Activated CD4-positive, alpha-beta T cell treated with anti-CD3 and anti-CD28 coated beads, Interleukin-2, amount 10 ng/mL, durations not matched to agents 24 days and 14 days (primary cell): ENCODE measurements at regions of chr1 and their contacts with region 1.

Region 1: GRCh38 chr1:23539698-23540266 is 8.7 kb upstream of the E2F2 start:
- DNase-seq: peak; percentile 98
- H3K4me3 Mint-ChIP-seq: peak overlapping the region; percentile 51
- H3K27ac Mint-ChIP-seq: peak overlapping the region; percentile 70
- H3K4me1 Mint-ChIP-seq: peaks cover 15% of the 10 kb centered on the region
- H3K27me3 Mint-ChIP-seq: peaks cover 3% of the 10 kb centered on the region

Region 2: DNA sequence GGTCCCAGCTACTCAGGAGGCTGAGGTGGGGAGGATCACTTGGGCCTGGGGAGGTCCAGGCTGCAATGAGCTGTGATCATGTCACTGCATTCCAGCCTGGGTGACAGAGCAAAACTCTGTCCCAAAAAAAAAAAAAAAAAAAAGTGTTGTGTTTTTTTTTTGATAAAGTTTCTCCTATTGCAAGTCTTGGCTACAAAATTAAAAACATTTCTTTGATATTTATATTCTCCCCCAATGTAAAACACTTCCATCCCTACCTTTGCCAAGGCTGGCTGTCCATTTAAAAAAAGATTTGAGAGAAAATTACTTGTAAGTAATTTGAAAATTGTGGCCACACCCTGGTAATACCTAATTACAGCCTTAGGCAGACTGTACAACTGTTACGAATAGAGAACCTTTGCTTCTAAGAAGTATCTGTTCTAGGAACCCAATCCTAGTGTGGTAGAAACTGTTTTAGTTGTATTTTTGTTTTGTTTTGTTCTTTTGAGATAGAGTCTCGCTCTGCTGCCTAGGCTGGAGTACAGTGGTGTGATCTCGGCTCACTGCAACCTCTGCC is 181.4 kb before region 1 on chr1:
- intact Hi-C with region 1: no loop called
- DNase-seq: no peak
- H3K4me3 Mint-ChIP-seq: no peak overlapping the region
- H3K27ac Mint-ChIP-seq: no peak overlapping the region
- H3K4me1 Mint-ChIP-seq: peaks cover 4% of the 10 kb centered on the region
- H3K27me3 Mint-ChIP-seq: no peaks in the 10 kb centered on the region

Region 3: DNA sequence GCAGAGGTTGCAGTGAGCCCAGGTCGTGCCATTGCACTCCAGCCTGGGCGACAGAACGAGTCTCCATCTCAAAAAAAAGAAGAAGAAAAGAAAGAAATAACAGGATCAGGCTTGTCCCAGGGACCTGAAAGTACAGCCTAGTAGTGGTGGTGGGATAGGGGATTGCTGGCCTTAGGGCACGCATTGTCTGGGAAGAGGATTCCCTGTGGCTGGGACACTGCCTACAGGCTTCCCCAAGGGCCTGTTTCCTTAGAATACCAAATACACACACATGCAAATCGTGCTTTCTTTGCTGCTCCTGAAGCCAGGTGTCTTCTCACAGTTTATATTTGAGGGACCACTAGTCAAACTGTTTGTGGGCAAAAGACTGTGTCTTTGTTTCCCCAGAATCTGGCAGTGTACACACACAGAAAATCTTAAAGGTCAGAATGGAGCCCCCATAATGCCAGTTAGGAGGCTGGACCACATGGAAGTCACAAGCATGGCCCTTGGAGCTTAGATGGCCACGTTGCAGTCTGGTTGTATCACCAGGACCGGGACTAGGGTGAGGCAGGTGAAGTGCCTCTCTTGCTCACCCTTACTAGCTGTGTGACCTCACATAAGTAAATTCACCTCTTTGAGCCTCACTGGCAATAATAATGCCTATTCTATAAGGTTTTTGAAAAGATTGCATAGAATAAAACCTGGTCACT is 43.1 kb before region 1 on chr1:
- intact Hi-C with region 1: loop called (anchors 1 kb)
- DNase-seq: no peak
- H3K4me3 Mint-ChIP-seq: no peak overlapping the region
- H3K27ac Mint-ChIP-seq: no peak overlapping the region
- H3K4me1 Mint-ChIP-seq: no peaks in the 10 kb centered on the region
- H3K27me3 Mint-ChIP-seq: peaks cover 7% of the 10 kb centered on the region

Region 4: GRCh38 chr1:23522244-23522982 is 17.4 kb before region 1 on chr1:
- intact Hi-C with region 1: loop called (anchors 2 kb)
- DNase-seq: no peak
- H3K4me3 Mint-ChIP-seq: no peak overlapping the region
- H3K27ac Mint-ChIP-seq: peak overlapping the region; percentile 9
- H3K4me1 Mint-ChIP-seq: peaks cover 35% of the 10 kb centered on the region
- H3K27me3 Mint-ChIP-seq: no peaks in the 10 kb centered on the region

Region 5: DNA sequence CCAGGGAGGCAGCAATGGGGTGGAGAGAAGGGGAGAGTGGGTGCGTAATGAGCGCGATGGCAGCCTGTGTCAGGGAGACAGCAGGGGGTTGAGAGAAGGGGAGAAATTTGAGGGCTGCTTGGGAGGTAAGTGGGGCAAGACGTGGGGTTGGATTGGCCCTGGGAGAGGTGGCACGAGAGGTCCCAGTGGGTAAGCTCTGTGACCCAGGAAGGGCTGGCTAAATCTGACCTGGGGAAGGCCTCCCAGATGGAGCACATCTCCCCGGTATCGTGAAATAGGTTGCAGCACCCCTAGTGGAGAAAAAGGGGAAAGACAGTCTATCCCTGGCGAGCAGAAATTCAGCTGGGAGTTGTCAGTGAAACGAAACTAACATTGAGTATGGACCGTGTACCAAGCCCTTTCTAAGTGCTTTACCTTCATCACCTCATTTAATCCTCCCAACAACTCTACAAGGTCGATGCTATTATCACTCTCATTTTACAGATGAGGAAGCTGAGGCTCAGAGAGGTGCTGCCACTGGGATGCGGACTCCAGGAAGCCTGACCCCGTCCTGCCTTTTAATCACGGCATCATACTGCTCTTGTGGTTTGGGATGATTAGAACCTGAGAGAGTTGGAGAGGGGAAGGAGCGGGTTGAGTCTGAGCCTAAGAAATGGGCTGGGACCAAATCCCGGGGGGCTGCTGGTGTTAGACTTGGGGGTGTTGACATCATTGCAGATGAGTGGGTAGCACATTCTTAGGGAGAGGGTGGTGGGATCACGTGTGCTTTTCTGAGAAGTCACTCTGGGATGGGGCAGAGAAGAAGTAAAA is 95.3 kb after region 1 on chr1:
- intact Hi-C with region 1: loop called (anchors 1 kb)
- DNase-seq: peak; percentile 91
- H3K4me3 Mint-ChIP-seq: peak overlapping the region; percentile 20
- H3K27ac Mint-ChIP-seq: peak overlapping the region; percentile 62
- H3K4me1 Mint-ChIP-seq: peaks cover 24% of the 10 kb centered on the region
- H3K27me3 Mint-ChIP-seq: no peaks in the 10 kb centered on the region

Region 6: GRCh38 chr1:23959041-23959460 is 419.3 kb after region 1 on chr1:
- intact Hi-C with region 1: loop called (anchors 10 kb)
- DNase-seq: peak; percentile 97
- H3K4me3 Mint-ChIP-seq: peak overlapping the region; percentile 100
- H3K27ac Mint-ChIP-seq: peak overlapping the region; percentile 100
- H3K4me1 Mint-ChIP-seq: peaks cover 47% of the 10 kb centered on the region
- H3K27me3 Mint-ChIP-seq: no peaks in the 10 kb centered on the region